ENCODE measurements at regions of chr6 and their contacts with region 1.

Region 1: GRCh38 chr6:44096612-44097011 is 30.6 kb downstream of the MRPL14 start:
- DNase-seq: peak; percentile 85
- H3K4me3 ChIP-seq: no peak overlapping the region
- H3K27ac ChIP-seq: no peak overlapping the region
- H3K4me1 ChIP-seq: no peaks in the 10 kb centered on the region
- H3K27me3 ChIP-seq: no peaks in the 10 kb centered on the region
- CTCF ChIP-seq: peak; percentile 85

Region 2: DNA sequence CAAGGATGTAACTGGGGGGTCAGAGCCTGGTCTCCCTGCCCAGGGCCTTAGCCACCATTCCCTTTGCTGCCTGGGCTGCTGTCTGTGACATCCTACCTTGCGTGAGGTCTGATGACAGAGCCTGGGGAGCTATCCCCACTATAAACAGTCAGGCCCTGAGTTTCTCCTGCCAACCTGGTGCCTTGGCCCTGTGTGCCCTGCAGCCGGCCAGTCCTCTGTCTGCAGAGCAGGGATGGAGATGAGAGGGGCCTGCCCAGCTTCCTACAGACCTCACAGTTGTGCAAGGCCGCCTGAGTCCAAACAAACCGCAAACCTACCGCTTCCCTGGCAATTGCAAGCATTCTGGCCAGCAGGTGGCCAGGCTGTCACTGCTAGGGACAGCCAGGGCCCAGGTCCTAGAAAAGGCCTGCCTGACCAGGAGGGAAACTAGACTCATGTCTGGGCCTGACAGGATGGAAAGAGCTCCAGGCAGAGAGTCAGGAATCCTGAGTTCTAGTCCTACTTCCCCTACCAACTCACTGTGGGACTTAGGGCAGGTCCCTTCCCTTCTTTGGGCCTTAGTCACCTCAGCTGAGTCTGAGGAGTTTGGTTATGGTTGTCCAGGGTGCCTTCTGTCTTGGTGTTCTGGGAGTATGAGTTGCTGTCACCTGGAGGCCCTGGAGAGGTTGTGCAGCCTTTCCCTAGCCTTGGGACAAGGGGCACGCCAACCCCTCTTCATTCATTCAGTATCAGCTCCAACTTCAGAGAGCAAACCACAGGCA is 240.4 kb before region 1 on chr6:
- intact Hi-C with region 1: no loop called
- DNase-seq: peak; percentile 43
- H3K4me3 ChIP-seq: no peak overlapping the region
- H3K27ac ChIP-seq: no peak overlapping the region
- H3K4me1 ChIP-seq: no peaks in the 10 kb centered on the region
- H3K27me3 ChIP-seq: no peaks in the 10 kb centered on the region
- CTCF ChIP-seq: peak; percentile 45

Region 3: DNA sequence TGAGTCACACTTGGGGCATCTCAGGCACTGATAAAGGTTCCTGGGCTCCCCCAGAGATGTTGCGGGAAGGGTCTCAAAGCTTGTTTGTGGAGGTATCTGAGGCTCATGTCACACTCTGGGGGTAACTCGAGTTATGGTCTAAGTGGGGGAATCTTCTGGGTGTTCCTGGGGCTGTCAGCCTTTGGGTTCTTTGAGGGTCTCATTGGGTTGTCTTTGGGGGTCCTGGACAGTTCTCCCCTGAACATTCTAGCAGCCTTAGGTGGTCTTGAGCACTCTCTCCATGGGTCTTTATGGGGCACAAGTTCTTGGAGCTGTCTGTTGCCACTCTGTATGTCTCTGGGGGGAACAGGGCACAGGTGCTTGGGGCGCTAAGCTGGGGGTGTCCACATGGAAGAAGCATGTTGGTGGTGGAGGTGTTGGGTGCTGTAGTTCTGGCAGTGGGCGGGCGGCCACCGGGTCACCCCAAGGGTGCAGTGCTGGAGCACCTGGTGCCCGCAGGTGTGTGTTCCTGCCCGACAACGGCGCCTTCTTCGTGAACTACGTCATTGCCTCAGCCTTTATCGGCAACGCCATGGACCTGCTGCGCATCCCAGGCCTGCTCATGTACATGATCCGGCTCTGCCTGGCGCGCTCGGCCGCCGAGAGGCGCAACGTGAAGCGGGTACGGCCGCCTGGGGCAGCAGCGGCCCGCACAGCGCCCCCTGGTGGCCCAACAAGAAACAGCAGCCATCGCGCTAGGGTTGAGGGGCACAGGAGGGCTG is 54.9 kb after region 1 on chr6:
- intact Hi-C with region 1: loop called (anchors 2 kb)
- DNase-seq: peak; percentile 77
- H3K4me3 ChIP-seq: no peak overlapping the region
- H3K27ac ChIP-seq: no peak overlapping the region
- H3K4me1 ChIP-seq: no peaks in the 10 kb centered on the region
- H3K27me3 ChIP-seq: no peaks in the 10 kb centered on the region
- CTCF ChIP-seq: peak; percentile 99

Region 4: GRCh38 chr6:44237813-44238433 is 141.3 kb after region 1 on chr6:
- intact Hi-C with region 1: loop called (anchors 5 kb)
- DNase-seq: peak; percentile 86
- H3K4me3 ChIP-seq: peak overlapping the region; percentile 41
- H3K27ac ChIP-seq: peak overlapping the region; percentile 96
- H3K4me1 ChIP-seq: no peaks in the 10 kb centered on the region
- H3K27me3 ChIP-seq: no peaks in the 10 kb centered on the region
- CTCF ChIP-seq: peak; percentile 94

Region 5: GRCh38 chr6:44338228-44339122 is 241.9 kb after region 1 on chr6:
- intact Hi-C with region 1: loop called (anchors 10 kb)
- DNase-seq: peak; percentile 68
- H3K4me3 ChIP-seq: no peak overlapping the region
- H3K27ac ChIP-seq: no peak overlapping the region
- H3K4me1 ChIP-seq: no peaks in the 10 kb centered on the region
- H3K27me3 ChIP-seq: peaks cover 9% of the 10 kb centered on the region
- CTCF ChIP-seq: peak; percentile 52